ENCODE measurements at regions of chr5 and their contacts with region 1.

Region 1: DNA sequence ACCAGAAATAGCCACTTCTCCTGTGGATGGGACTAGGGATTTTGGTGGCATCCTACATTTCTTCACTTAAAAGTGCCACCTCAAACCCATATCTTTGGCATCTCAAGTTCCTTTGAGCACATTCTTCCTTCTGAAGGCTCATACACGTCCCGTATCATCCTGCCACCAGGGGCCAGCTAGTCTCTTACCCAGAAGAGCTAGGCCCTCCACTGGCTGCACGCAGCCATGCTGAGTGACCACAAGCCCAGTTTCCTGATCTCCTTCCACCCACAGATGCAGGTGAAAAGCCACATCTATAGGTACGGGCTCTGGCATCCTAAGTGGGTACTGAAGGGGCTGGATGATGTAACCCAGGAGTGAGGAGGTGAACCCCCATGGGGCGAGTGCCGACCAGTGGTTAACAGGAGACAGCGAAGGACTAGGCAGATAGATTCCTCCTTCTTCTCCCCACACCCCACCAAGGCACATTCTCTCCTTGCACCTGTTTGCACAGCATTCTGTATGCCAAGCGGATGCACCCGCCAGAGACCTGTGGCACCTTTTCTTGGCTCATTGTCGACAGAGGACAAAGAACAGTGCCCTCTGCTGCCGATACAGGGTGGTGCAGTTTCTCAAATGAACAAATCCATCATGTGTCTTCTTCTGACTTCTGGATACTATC is 14.4 kb upstream of the SCGB3A1 start:
- DNase-seq: peak; percentile 51
- ATAC-seq: peak; percentile 73
- H3K4me3 ChIP-seq: no peak overlapping the region
- H3K27ac ChIP-seq: no peak overlapping the region
- H3K4me1 ChIP-seq: no peaks in the 10 kb centered on the region
- H3K27me3 ChIP-seq: peaks cover 10% of the 10 kb centered on the region; the same call in 1 of the 2 replicates
- CTCF ChIP-seq: peak; percentile 56
- POLR2A ChIP-seq: no peak
- RAD21 ChIP-seq: peak; percentile 52

Region 2: GRCh38 chr5:180353048-180353979 is 252.4 kb before region 1 on chr5 and contains the start of gene GFPT2:
- CTCF ChIA-PET with region 1: no interaction called
- POLR2A ChIA-PET with region 1: no interaction called
- dilution Hi-C with region 1: no loop called
- in situ Hi-C with region 1: no loop called
- intact Hi-C with region 1: loop called (anchors 1 kb)
- DNase-seq: peak; percentile 64
- ATAC-seq: peak; percentile 93
- H3K4me3 ChIP-seq: peak within 1 kb of the TSS; percentile 83
- H3K27ac ChIP-seq: no peak within 1 kb of the TSS; the same call in 1 of the 2 replicates
- H3K4me1 ChIP-seq: no peaks in the 10 kb centered on the region; the same call in 1 of the 2 replicates
- H3K27me3 ChIP-seq: peaks cover 13% of the 10 kb centered on the region; the same call in 1 of the 2 replicates
- CTCF ChIP-seq: no peak
- POLR2A ChIP-seq: peak; percentile 93
- RAD21 ChIP-seq: no peak
- total RNA-seq, gene GFPT2: 20.6 and 20.8 TPM in 2 replicates

Measured in IMR-90 (cell line).